ENCODE measurements at regions of chr1 and their contacts with region 1.

Region 1: DNA sequence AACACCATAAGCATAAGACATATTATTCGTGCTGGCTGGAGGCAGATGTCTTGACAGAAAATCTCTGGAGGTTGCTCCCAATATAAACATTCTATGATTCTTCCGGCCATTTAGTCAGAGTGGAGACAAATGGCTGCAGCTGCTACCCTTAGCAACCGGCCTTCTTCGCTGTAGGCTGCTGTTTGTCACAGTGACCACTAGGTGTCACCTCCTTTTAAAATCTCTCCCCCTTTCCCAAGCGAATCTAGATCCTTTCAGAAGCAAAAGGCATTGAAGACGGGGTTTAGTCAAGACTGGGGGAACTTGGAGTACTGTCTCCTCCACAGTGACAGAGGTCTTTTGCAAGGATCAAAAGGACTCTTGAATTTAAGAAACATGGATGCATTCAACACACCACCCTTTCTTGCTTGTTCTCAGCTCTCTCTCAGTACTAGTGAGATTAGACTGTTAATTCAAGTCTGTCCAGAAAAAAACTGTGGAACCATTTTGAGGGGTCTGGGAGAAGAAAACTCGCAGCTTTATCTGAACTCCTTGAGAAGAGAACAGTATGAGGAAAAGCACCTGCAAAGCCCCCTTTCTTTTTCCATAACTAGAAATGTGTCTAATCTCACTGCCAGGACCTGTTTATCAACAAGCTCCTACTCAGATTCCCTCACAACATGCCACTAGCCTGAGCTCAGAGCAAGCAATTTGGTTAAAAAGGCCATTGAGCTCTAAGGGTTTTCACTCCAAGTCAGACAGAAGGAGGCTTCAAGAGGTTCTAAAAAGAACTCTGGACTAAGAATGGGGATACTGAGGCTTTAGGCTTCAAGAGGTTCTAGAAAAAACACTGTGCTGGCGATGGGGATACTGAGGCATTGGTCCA is 408.3 kb upstream of the PLXNA2 start:
- DNase-seq: peak; percentile 18 to 56
- ATAC-seq: peak; percentile 89 to 94
- H3K4me3 ChIP-seq: no peak overlapping the region
- H3K27ac ChIP-seq: no peak overlapping the region
- H3K4me1 ChIP-seq: no peaks in the 10 kb centered on the region
- CTCF ChIP-seq: peak; percentile 76
- EP300 ChIP-seq: no peak
- POLR2A ChIP-seq: no peak
- RAD21 ChIP-seq: peak; percentile 64

Region 2: GRCh38 chr1:208577381-208577905 is 75.1 kb before region 1 on chr1:
- CTCF ChIA-PET with region 1: no interaction called
- POLR2A ChIA-PET with region 1: no interaction called
- DNase-seq: no peak
- ATAC-seq: no peak
- H3K4me3 ChIP-seq: no peak overlapping the region
- H3K27ac ChIP-seq: no peak overlapping the region
- H3K4me1 ChIP-seq: no peaks in the 10 kb centered on the region
- CTCF ChIP-seq: no peak
- EP300 ChIP-seq: no peak
- POLR2A ChIP-seq: no peak
- RAD21 ChIP-seq: no peak

Region 3: DNA sequence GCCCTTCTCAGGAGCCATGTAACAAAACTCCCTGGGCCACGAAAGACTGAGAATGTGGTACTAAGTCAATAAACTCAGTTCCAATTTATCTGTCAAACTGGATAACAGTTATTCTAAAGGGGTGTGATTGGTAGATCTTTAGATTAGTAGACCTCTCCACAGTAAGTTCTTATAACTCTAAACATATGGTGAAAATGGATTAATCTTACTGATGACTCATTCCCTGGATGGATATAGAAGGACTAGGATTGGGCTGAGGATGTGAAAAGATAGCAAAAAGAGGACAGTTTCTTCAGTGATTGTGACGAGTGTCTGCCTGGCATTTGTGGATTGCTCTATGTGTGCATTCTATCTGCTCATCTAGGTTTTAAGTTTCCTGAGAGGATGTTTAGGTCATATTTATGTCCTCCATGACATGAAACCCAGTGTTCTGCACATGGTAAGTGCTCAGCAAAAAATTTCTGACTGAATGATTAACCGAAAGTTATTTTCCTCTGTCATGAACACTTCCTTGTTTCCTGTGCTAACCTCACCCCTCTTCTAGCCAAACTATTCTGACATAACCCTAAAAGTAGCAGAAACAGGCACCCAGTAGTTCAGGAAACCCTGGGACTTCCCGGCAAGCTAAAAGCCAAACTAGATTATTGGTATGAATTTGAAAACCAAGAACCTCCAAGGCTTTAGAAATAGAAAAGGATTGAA is 10.8 kb before region 1 on chr1:
- CTCF ChIA-PET with region 1: interaction called, 11 read pairs
- POLR2A ChIA-PET with region 1: no interaction called
- DNase-seq: no peak
- ATAC-seq: no peak
- H3K4me3 ChIP-seq: no peak overlapping the region
- H3K27ac ChIP-seq: no peak overlapping the region
- H3K4me1 ChIP-seq: no peaks in the 10 kb centered on the region
- CTCF ChIP-seq: no peak
- EP300 ChIP-seq: no peak
- POLR2A ChIP-seq: no peak
- RAD21 ChIP-seq: no peak

Region 4: DNA sequence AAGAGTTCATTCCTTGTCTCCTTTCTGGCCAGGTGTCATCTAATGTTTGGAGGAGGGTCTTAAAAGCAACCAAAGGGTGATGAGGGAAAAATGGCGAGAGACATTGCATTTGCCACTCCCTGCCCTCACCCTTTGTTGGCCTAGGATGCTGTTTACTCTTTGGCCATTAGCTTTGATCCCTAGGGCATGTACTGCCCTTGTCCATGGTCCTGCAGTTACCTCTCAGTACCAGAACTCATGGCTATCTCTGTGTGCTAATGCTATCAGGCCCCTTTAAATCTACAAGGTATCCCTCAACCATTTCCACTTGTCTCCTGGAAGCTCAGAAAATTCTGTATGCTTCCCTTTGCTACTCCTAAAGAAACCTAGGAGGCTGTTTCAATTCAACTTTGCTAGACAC is 16.5 kb after region 1 on chr1:
- CTCF ChIA-PET with region 1: interaction called, 24 read pairs
- POLR2A ChIA-PET with region 1: no interaction called
- DNase-seq: no peak
- ATAC-seq: no peak
- H3K4me3 ChIP-seq: no peak overlapping the region
- H3K27ac ChIP-seq: no peak overlapping the region
- H3K4me1 ChIP-seq: no peaks in the 10 kb centered on the region
- CTCF ChIP-seq: no peak
- EP300 ChIP-seq: no peak
- POLR2A ChIP-seq: no peak
- RAD21 ChIP-seq: no peak

Region 5: GRCh38 chr1:208714323-208714722 is 61.8 kb after region 1 on chr1:
- CTCF ChIA-PET with region 1: no interaction called
- POLR2A ChIA-PET with region 1: no interaction called
- DNase-seq: no peak
- ATAC-seq: no peak
- H3K4me3 ChIP-seq: no peak overlapping the region
- H3K27ac ChIP-seq: no peak overlapping the region
- H3K4me1 ChIP-seq: no peaks in the 10 kb centered on the region
- CTCF ChIP-seq: no peak
- EP300 ChIP-seq: no peak
- POLR2A ChIP-seq: no peak
- RAD21 ChIP-seq: no peak

Measured in A549 (cell line).